ENCODE measurements at regions of chr2 and their contacts with region 1.

Region 1: DNA sequence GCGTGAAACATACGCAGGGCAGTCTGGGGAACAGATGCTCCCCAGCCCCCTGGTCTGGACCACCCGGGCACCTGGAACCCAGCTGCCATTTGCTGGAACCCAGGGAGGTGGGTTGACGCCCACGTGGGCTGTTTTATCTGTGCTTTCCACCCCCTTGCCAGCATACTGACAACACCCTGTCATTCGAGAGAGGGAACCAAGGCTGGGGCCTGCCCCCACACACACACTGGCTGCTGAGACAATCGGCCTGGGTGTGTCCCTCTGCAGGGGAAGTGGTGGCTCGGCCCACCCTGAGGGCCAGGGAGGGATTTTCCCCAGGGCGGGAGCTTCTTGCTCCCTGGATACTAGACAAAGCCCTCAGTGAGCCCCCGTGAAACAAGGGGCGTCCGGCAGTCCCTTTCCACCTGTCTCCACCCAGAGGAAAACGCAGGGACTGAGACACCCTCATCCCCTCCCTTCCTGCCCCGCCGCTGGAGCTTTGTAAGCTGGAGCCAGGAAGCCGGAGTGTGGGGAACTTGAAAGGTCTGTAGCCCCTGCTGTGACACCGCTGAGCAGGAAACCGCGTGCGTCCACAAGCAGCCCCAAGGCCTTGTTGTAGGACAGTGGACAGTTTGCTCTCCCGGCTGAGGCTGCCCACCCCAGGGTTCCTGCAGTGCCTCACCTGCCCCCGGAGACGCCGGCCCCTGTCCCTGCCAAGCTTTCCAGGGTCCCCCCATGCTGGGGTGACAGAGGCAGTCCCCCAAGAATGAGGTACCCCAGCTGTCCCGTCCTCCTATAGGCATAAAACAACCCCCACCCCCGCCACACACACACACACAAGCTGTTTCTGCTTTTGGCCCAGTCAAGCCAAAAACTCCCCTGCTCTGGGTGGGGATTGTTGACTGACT is 14.1 kb upstream of the KLF11 start:
- DNase-seq: no peak
- H3K4me3 ChIP-seq: no peak overlapping the region
- H3K27ac ChIP-seq: no peak overlapping the region
- H3K4me1 ChIP-seq: peaks cover 0 to 17% (median 7%) of the 10 kb centered on the region in 4 experiments; a peak in 6 of 7 replicates
- H3K27me3 ChIP-seq: no peaks in the 10 kb centered on the region
- CTCF ChIP-seq: no peak; a peak in 1 of 4 replicates
- EP300 ChIP-seq: no peak
- POLR2A ChIP-seq: no peak
- RAD21 ChIP-seq: 0 out of 4 replicates have a peak, but pooled peaks of 1 of the 2 experiments have one; percentile 2

Region 2: DNA sequence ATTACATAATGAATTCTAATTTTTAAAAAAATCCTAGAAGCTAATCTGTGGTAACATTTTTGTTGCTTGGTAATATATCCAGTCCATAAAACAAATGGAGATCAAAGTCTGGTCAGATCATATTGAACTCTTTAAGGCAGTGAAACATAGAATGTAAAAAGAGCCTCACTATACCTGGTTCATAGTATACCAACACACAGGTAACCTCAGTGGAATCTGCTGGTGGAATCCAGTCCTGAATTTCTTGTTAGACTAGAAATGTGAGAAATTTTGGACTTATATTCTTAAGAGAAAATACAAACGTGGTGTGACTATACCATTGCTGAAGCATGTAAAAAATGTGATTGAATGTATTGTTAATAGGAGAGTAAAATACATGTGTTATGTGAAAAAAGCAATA is 123.9 kb before region 1 on chr2:
- CTCF ChIA-PET with region 1: no interaction called
- POLR2A ChIA-PET with region 1: no interaction called
- DNase-seq: no peak
- H3K4me3 ChIP-seq: no peak overlapping the region
- H3K27ac ChIP-seq: no peak overlapping the region
- H3K4me1 ChIP-seq: no peaks in the 10 kb centered on the region; a peak in 1 of 7 replicates
- H3K27me3 ChIP-seq: no peaks in the 10 kb centered on the region
- CTCF ChIP-seq: no peak
- EP300 ChIP-seq: no peak
- POLR2A ChIP-seq: no peak
- RAD21 ChIP-seq: no peak

Region 3: GRCh38 chr2:10006236-10007161 is 22.7 kb before region 1 on chr2:
- CTCF ChIA-PET with region 1: interaction called, 14 read pairs
- POLR2A ChIA-PET with region 1: no interaction called
- DNase-seq: no peak
- H3K4me3 ChIP-seq: no peak overlapping the region; a peak in 1 of 8 replicates
- H3K27ac ChIP-seq: no peak overlapping the region
- H3K4me1 ChIP-seq: peaks cover 0 to 2% (median under 1%) of the 10 kb centered on the region in 4 experiments; a peak in 1 of 7 replicates
- H3K27me3 ChIP-seq: no peaks in the 10 kb centered on the region
- CTCF ChIP-seq: no peak
- EP300 ChIP-seq: no peak
- POLR2A ChIP-seq: no peak
- RAD21 ChIP-seq: no peak

Region 4: DNA sequence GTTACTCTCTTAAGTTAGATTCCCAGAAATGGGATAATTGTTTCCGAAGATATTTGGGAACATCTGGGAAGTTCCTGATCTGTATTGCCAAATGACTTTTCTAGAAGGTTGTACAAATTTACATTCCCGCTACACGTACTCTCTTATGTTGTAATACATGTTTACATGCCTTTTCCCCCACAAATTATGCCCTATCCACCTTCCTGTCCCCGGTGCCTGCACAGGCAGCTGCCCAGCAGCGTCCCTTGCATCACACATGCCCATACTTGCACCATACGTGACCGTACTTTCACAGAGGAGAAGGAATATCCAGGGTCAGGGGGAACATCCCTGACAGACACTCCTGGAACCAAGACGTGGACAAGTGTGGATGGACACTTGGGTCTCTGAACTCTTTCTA is 10.1 kb before region 1 on chr2:
- CTCF ChIA-PET with region 1: interaction called, 14 read pairs
- POLR2A ChIA-PET with region 1: interaction called, 4 read pairs
- DNase-seq: no peak
- H3K4me3 ChIP-seq: no peak overlapping the region
- H3K27ac ChIP-seq: no peak overlapping the region
- H3K4me1 ChIP-seq: no peaks in the 10 kb centered on the region
- H3K27me3 ChIP-seq: no peaks in the 10 kb centered on the region
- CTCF ChIP-seq: no peak
- EP300 ChIP-seq: no peak
- POLR2A ChIP-seq: no peak
- RAD21 ChIP-seq: no peak

Region 5: GRCh38 chr2:10058251-10058761 is 29.1 kb after region 1 on chr2:
- CTCF ChIA-PET with region 1: no interaction called
- POLR2A ChIA-PET with region 1: no interaction called
- DNase-seq: no peak
- H3K4me3 ChIP-seq: no peak overlapping the region
- H3K27ac ChIP-seq: no peak overlapping the region
- H3K4me1 ChIP-seq: peaks cover 0 to 16% (median 1%) of the 10 kb centered on the region in 4 experiments; a peak in 3 of 7 replicates
- H3K27me3 ChIP-seq: no peaks in the 10 kb centered on the region
- CTCF ChIP-seq: no peak
- EP300 ChIP-seq: no peak
- POLR2A ChIP-seq: no peak
- RAD21 ChIP-seq: peak in 1 of 2 experiments; percentile 14; a peak in 1 of 4 replicates

Region 6: GRCh38 chr2:10078704-10079233 is 49.5 kb after region 1 on chr2:
- CTCF ChIA-PET with region 1: no interaction called
- POLR2A ChIA-PET with region 1: no interaction called
- DNase-seq: no peak
- H3K4me3 ChIP-seq: peak overlapping the region in 3 of 4 experiments; percentile 29 to 68 (median 42); a peak in 4 of 8 replicates
- H3K27ac ChIP-seq: no peak overlapping the region
- H3K4me1 ChIP-seq: peaks cover 0 to 7% (median 5%) of the 10 kb centered on the region in 4 experiments; a peak in 4 of 7 replicates
- H3K27me3 ChIP-seq: peaks cover 14 to 32% (median 25%) of the 10 kb centered on the region in 4 experiments
- CTCF ChIP-seq: no peak
- EP300 ChIP-seq: no peak
- POLR2A ChIP-seq: no peak
- RAD21 ChIP-seq: no peak

Measured in H1 (cell line).